BJ (cell line): ENCODE measurements at regions of chr19 and their contacts with region 1.

Region 1: GRCh38 chr19:42450314-42450934 is 7.7 kb upstream of the CXCL17 start:
- DNase-seq: no peak
- H3K4me3 ChIP-seq: no peak overlapping the region
- H3K27me3 ChIP-seq: peaks cover 8% of the 10 kb centered on the region
- CTCF ChIP-seq: peak; percentile 82

Region 2: DNA sequence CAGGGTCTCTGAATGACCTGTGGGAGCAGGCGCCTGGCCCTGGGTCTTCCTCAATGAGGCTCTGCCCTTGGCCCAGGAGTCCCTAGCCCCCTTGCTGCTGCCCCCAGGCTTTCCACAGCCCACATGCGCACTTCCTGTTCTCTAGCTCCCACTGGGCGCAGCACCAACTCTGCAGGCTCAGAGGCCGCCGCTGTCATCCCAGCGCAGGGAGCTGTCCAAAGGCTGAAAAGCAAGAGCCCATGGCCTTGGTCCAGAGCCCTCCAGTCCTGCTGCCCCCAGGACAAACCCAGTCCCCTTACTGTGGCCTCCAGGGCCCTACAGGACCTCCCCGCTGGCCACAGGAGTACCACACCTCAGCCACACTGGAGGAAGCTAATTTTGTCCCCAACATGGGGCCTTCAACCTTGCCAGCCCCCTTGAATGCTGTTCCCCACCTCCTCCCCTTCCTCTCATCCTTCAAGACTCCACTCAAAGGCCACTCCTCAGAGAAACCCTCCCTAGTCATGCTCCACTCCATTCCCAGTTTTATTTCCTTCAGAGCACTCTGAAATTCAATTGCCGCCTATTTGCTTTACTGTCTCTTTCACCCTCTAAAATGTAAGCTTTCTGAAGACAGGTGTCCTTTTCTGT is 310.2 kb before region 1 on chr19:
- CTCF ChIA-PET with region 1: no interaction called
- POLR2A ChIA-PET with region 1: no interaction called
- DNase-seq: no peak
- H3K4me3 ChIP-seq: no peak overlapping the region
- H3K27me3 ChIP-seq: peaks cover 2% of the 10 kb centered on the region
- CTCF ChIP-seq: no peak

Region 3: GRCh38 chr19:42468273-42468796 is 17.9 kb after region 1 on chr19:
- CTCF ChIA-PET with region 1: interaction called, 17 read pairs
- POLR2A ChIA-PET with region 1: no interaction called
- DNase-seq: peak; percentile 46
- H3K4me3 ChIP-seq: no peak overlapping the region
- H3K27me3 ChIP-seq: no peaks in the 10 kb centered on the region; the same call in 1 of the 2 replicates
- CTCF ChIP-seq: no peak

Region 4: DNA sequence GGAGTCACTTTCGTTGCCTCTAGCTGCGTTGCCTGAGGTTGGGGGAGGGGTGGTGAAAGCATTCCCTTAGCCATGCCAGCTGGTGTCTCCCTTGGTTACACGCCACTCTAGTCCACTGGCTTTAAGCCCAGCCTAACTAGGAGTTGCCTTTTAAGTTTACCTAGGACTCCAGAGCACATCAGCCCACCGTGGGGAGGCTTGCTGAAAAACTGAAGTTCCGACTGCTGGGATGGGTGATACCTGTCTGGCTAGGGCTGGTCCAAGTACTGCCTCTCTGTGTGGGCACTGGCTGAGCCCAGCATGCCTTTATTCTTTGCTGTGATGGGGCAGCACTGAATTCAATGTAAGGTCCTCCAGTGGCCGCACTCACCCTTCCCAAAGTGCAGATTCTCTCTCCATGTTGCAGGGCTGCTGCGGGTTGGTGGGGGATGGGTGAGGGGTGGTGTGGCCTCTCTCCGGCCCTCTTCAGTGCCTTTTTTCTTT is 89.7 kb after region 1 on chr19:
- CTCF ChIA-PET with region 1: interaction called, 17 read pairs
- POLR2A ChIA-PET with region 1: no interaction called
- DNase-seq: no peak
- H3K4me3 ChIP-seq: no peak overlapping the region
- H3K27me3 ChIP-seq: peaks cover 18% of the 10 kb centered on the region
- CTCF ChIP-seq: no peak

Region 5: GRCh38 chr19:42965176-42965575 is 514.8 kb after region 1 on chr19:
- CTCF ChIA-PET with region 1: no interaction called
- POLR2A ChIA-PET with region 1: no interaction called
- DNase-seq: peak; percentile 47
- H3K4me3 ChIP-seq: no peak overlapping the region
- H3K27me3 ChIP-seq: no peaks in the 10 kb centered on the region
- CTCF ChIP-seq: no peak